ENCODE measurements at regions of chr13 and their contacts with region 1.

Region 1: DNA sequence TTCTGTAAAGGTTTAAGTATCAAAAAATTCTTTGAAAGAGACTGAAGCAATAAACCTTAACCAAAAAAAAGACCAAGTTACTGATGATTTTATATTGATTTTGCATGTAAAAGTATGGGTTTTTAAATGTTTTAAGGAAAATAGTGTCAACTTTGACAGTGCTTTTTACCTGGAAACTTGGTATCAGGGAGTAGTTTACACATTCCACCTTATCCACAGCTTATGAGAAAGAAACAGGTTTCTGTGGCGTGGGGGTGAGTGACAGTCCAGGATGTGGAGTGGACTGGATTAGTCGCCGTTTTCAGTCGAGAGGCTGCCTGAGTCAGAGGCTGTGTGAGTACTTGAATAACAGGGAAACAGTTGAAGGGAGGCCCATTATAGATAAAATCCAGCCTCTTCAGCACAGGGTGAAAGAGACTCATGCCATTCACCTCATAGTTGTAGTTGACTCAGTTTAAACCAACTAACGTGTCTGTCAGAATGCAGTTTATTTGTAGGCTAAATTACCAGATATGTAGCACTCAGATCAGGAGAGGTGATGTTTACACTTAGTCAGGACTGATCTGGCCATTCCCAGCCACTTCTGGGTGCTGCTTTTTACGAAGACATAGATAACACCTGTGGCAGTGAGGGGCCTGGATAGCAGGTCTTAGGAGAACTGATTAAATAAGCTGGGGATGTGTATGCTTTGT is 595 bp upstream of the GPR183 start:
- DNase-seq: peak in 5 of 9 experiments; percentile 38 to 63 (median 50)
- ATAC-seq: peak; percentile 57
- H3K4me3 ChIP-seq: peak overlapping the region in 1 of 2 experiments; percentile 53
- H3K4me3 Mint-ChIP-seq: peak overlapping the region; percentile 93
- H3K27ac ChIP-seq: peak overlapping the region; percentile 13 to 65
- H3K27ac Mint-ChIP-seq: peak overlapping the region; percentile 89
- H3K4me1 ChIP-seq: peaks cover 67% of the 10 kb centered on the region
- H3K4me1 Mint-ChIP-seq: peaks cover 81% of the 10 kb centered on the region
- H3K27me3 ChIP-seq: no peaks in the 10 kb centered on the region
- H3K27me3 Mint-ChIP-seq: no peaks in the 10 kb centered on the region
- CTCF ChIP-seq: no peak

Region 2: GRCh38 chr13:99053636-99054233 is 254.1 kb before region 1 on chr13:
- CTCF ChIA-PET with region 1: no interaction called
- POLR2A ChIA-PET with region 1: no interaction called
- intact Hi-C with region 1: no loop called
- DNase-seq: peak in 2 of 9 experiments; percentile 33 to 36
- ATAC-seq: no peak
- H3K4me3 ChIP-seq: peak overlapping the region in 1 of 2 experiments; percentile 23
- H3K4me3 Mint-ChIP-seq: peak overlapping the region; percentile 33
- H3K27ac ChIP-seq: peak overlapping the region; percentile 13 to 33
- H3K27ac Mint-ChIP-seq: peak overlapping the region; percentile 95
- H3K4me1 ChIP-seq: peaks cover 84% of the 10 kb centered on the region
- H3K4me1 Mint-ChIP-seq: peaks cover 89% of the 10 kb centered on the region
- H3K27me3 ChIP-seq: no peaks in the 10 kb centered on the region
- H3K27me3 Mint-ChIP-seq: no peaks in the 10 kb centered on the region
- CTCF ChIP-seq: no peak

Region 3: GRCh38 chr13:99275093-99275469 is 32.7 kb before region 1 on chr13:
- CTCF ChIA-PET with region 1: interaction called, 78 read pairs
- POLR2A ChIA-PET with region 1: interaction called, 6 read pairs
- intact Hi-C with region 1: loop called (anchors 5 kb)
- DNase-seq: peak in 8 of 9 experiments; percentile 22 to 83 (median 56)
- ATAC-seq: peak; percentile 63
- H3K4me3 ChIP-seq: no peak overlapping the region
- H3K4me3 Mint-ChIP-seq: peak overlapping the region; percentile 23
- H3K27ac ChIP-seq: peak overlapping the region in 1 of 2 experiments; percentile 34
- H3K27ac Mint-ChIP-seq: peak overlapping the region; percentile 86
- H3K4me1 ChIP-seq: peaks cover 86% of the 10 kb centered on the region
- H3K4me1 Mint-ChIP-seq: peaks cover 93% of the 10 kb centered on the region
- H3K27me3 ChIP-seq: no peaks in the 10 kb centered on the region
- H3K27me3 Mint-ChIP-seq: no peaks in the 10 kb centered on the region
- CTCF ChIP-seq: no peak

Region 4: DNA sequence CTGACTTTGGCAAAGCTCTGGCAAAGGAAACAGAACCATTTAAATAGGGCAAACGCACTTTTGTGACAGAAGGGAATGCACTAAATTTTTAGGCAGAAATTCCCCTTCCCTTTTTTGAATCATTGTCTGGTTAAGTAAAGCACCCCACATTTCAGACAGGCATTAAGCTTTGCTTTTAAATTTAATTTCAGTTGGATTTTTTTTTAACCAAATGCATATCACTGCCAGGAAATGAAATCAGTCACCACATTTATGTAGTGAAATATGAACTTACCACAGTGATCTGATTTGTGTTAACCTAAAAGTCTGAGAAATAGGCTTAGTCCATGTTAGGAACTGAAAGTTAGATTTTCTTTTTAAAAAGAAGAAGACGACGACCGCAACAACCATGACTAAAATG is 11.4 kb before region 1 on chr13:
- CTCF ChIA-PET with region 1: interaction called, 5 read pairs
- POLR2A ChIA-PET with region 1: interaction called, 7 read pairs
- intact Hi-C with region 1: loop called in 1 of 2 experiments (anchors 1 kb)
- DNase-seq: peak in 2 of 9 experiments; percentile 48 to 70
- ATAC-seq: peak; percentile 80
- H3K4me3 ChIP-seq: peak overlapping the region; percentile 1 to 2
- H3K4me3 Mint-ChIP-seq: peak overlapping the region; percentile 78
- H3K27ac ChIP-seq: peak overlapping the region in 1 of 2 experiments; percentile 49
- H3K27ac Mint-ChIP-seq: peak overlapping the region; percentile 93
- H3K4me1 ChIP-seq: peaks cover 64% of the 10 kb centered on the region
- H3K4me1 Mint-ChIP-seq: peaks cover 81% of the 10 kb centered on the region
- H3K27me3 ChIP-seq: no peaks in the 10 kb centered on the region
- H3K27me3 Mint-ChIP-seq: no peaks in the 10 kb centered on the region
- CTCF ChIP-seq: no peak

Region 5: GRCh38 chr13:99322297-99323103 is 14.7 kb after region 1 on chr13:
- CTCF ChIA-PET with region 1: interaction called, 3 read pairs
- POLR2A ChIA-PET with region 1: interaction called, 5 read pairs
- intact Hi-C with region 1: loop called in 1 of 2 experiments (anchors 2 kb)
- DNase-seq: peak in 5 of 9 experiments; percentile 40 to 81 (median 46)
- ATAC-seq: peak; percentile 80
- H3K4me3 ChIP-seq: peak overlapping the region in 1 of 2 experiments; percentile 6
- H3K4me3 Mint-ChIP-seq: peak overlapping the region; percentile 57
- H3K27ac ChIP-seq: peak overlapping the region; percentile 22 to 56
- H3K27ac Mint-ChIP-seq: peak overlapping the region; percentile 92
- H3K4me1 ChIP-seq: peaks cover 56% of the 10 kb centered on the region
- H3K4me1 Mint-ChIP-seq: peaks cover 73% of the 10 kb centered on the region
- H3K27me3 ChIP-seq: no peaks in the 10 kb centered on the region
- H3K27me3 Mint-ChIP-seq: no peaks in the 10 kb centered on the region
- CTCF ChIP-seq: no peak

Region 6: GRCh38 chr13:99380921-99381645 is 73.3 kb after region 1 on chr13:
- CTCF ChIA-PET with region 1: interaction called, 21 read pairs
- POLR2A ChIA-PET with region 1: interaction called, 11 read pairs
- intact Hi-C with region 1: loop called in 1 of 2 experiments (anchors 2 kb)
- DNase-seq: peak in 7 of 9 experiments; percentile 41 to 84 (median 75)
- ATAC-seq: peak; percentile 50
- H3K4me3 ChIP-seq: no peak overlapping the region
- H3K4me3 Mint-ChIP-seq: peak overlapping the region; percentile 53
- H3K27ac ChIP-seq: peak overlapping the region; percentile 42 to 72
- H3K27ac Mint-ChIP-seq: peak overlapping the region; percentile 98
- H3K4me1 ChIP-seq: peaks cover 79% of the 10 kb centered on the region
- H3K4me1 Mint-ChIP-seq: peaks cover 93% of the 10 kb centered on the region
- H3K27me3 ChIP-seq: no peaks in the 10 kb centered on the region
- H3K27me3 Mint-ChIP-seq: no peaks in the 10 kb centered on the region
- CTCF ChIP-seq: no peak

Region 7: GRCh38 chr13:100334214-100334613 is 1026.4 kb after region 1 on chr13:
- CTCF ChIA-PET with region 1: no interaction called
- POLR2A ChIA-PET with region 1: no interaction called
- intact Hi-C with region 1: no loop called
- DNase-seq: no peak
- ATAC-seq: no peak
- H3K4me3 ChIP-seq: no peak overlapping the region
- H3K4me3 Mint-ChIP-seq: no peak overlapping the region
- H3K27ac ChIP-seq: no peak overlapping the region
- H3K27ac Mint-ChIP-seq: no peak overlapping the region
- H3K4me1 ChIP-seq: no peaks in the 10 kb centered on the region
- H3K4me1 Mint-ChIP-seq: no peaks in the 10 kb centered on the region
- H3K27me3 ChIP-seq: no peaks in the 10 kb centered on the region
- H3K27me3 Mint-ChIP-seq: no peaks in the 10 kb centered on the region
- CTCF ChIP-seq: no peak

Measured in CD8-positive, alpha-beta T cell (primary cell).